ENCODE measurements at regions of chr11 and their contacts with region 1.

Region 1: GRCh38 chr11:12888525-12889158 is 120.5 kb upstream of the RASSF10 start:
- DNase-seq: peak; percentile 90 to 95 (median 93)
- H3K4me3 ChIP-seq: no peak overlapping the region
- H3K27ac ChIP-seq: peak overlapping the region in 1 of 2 donors; percentile 73
- H3K4me1 ChIP-seq: peaks cover 9% of the 10 kb centered on the region
- H3K27me3 ChIP-seq: no peaks in the 10 kb centered on the region
- CTCF ChIP-seq: peak; percentile 53 to 81 (median 79)
- EP300 ChIP-seq: no peak
- POLR2A ChIP-seq: no peak

Region 2: DNA sequence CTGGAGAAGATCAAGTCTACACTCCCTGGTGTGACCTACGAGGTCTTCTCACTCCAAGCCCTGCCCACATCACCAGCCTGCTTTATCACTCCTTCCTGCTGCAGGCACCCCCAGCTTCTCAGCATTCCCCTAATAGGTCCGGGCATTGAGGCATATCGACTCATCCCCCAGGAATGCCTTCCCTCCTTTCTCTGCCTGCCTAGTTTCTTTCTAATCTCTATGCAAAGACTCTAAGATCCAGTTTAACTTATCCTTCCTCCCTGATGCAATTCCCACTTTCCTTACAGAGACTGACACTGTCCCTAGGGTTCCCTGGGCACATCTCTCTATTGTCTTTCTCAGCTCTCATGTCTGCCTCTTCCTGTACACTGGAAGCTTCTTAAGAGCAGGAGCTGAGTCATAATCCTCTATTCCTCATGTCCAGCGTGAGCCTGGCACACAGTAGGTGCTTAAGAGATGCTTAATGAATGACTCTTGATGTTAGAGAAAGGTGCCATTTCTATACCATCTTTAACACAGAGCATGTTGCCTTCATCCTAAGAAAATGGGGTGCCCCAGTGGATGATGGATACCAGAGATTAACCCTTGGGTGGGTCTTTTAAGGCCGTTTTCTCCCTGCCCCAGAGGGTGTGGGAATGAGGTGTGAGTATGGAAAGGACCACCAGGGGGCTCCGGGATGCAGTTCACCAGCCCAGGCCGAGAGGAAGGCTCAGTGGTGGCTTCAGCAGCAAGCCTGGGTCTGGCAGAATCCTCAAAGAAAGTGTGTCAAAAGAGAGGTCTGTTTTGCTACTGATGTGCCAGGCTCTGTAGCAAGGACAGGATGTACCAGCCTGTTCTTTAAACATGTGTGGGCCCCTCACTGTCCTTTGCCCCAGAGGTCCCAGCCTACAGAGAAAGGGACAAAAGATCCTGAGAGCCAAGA is 476.6 kb before region 1 on chr11:
- intact Hi-C with region 1: loop called in 2 of 4 experiments (anchors 2 to 10 kb)
- DNase-seq: peak; percentile 70 to 80 (median 71)
- H3K4me3 ChIP-seq: no peak overlapping the region
- H3K27ac ChIP-seq: peak overlapping the region in 1 of 2 donors; percentile 57
- H3K4me1 ChIP-seq: peaks cover 28% of the 10 kb centered on the region
- H3K27me3 ChIP-seq: no peaks in the 10 kb centered on the region
- CTCF ChIP-seq: peak; percentile 37 to 76 (median 63)
- EP300 ChIP-seq: no peak
- POLR2A ChIP-seq: no peak

Region 3: GRCh38 chr11:12680246-12680939 is 208.2 kb before region 1 on chr11:
- intact Hi-C with region 1: loop called in 3 of 4 experiments (anchors 5 to 10 kb)
- DNase-seq: peak; percentile 70 to 78 (median 74)
- H3K4me3 ChIP-seq: no peak overlapping the region
- H3K27ac ChIP-seq: no peak overlapping the region
- H3K4me1 ChIP-seq: peaks cover 13% of the 10 kb centered on the region
- H3K27me3 ChIP-seq: no peaks in the 10 kb centered on the region
- CTCF ChIP-seq: no peak
- EP300 ChIP-seq: no peak
- POLR2A ChIP-seq: no peak

Region 4: DNA sequence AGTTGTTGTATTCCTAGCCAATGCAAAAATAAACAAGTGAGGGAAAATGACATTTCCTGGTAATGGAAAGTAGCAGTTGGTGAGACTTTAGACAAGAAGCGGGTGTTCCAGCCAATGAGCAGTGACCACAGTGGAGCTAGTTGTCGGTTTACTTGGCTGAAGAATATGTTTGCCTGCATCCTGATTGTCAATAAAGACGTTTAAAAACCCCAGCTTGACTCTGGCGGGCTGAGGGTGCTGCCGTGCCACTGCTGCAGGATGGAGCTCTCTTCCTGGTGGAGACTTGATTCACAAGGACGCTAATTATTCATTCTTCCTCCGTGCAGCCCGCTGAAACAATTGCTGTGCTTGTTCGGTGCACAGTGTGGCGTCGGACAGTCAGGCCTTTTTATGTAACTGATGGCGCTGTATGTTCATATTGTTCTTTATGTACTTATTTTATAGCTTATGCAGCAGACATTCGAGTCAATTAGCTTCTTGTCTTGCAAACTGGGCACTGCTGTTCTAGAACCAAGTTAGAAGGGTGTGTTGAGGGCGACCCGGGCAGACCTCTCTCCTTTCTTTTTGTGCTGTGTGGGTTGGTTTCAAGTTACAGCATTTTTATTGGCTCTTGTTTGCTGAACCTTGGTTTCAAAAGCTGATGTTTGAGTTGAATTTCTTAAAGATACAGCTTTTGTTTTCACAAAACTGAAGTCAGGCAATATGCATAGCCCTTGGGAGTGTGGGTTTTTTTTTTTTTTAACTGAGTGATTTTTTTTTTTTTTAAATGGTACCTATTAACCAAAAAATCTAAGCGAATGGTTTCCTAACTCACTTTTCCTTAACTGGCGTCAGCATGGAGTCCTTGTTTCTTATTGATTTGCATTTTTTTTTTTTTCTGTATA is 60.5 kb before region 1 on chr11:
- intact Hi-C with region 1: loop called in 1 of 4 experiments (anchors 5 kb)
- DNase-seq: peak in 2 of 5 donors; percentile 34 to 48
- H3K4me3 ChIP-seq: peak overlapping the region; percentile 27
- H3K27ac ChIP-seq: peak overlapping the region in 1 of 2 donors; percentile 78
- H3K4me1 ChIP-seq: peaks cover 32% of the 10 kb centered on the region
- H3K27me3 ChIP-seq: no peaks in the 10 kb centered on the region
- CTCF ChIP-seq: no peak
- EP300 ChIP-seq: no peak
- POLR2A ChIP-seq: no peak

Measured in ovary (tissue), 10 donors.